K562 (cell line): ENCODE measurements at regions of chr1 and their contacts with region 1.

Region 1: DNA sequence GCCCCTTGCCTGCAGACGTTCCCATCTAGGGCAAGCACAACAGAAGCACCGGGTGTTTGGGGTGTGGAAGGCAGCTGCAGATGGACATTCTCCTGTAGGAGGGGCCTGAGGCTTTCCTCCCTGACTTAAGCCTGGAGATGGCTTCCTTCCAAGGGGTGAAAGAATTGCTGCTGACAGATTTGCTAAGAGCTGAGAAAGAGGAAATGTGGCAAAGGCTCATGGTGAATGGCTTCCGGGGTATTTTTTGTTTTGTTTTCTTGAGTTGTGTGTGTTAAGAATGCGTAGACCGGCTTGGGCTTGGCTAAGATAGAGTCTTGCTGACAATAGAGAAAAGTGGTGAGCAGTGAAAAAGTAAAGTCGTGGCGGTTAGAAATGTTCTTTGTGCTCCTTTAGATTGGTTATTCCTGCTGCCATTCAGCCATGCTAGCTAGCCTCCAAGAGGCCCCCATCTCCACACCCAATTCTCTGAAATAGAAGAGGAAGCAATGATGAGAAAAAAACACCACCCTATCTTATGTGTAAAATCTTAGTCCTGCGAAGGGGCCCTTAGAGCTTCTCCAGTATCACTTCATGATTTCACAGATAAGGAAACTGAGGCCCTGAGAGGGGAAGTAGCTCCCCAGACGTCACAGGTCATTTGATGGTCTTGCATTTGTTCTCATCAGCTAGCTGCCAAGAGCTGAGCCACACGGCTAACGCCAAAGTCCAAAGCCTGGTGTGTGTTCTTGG is 36.9 kb downstream of the EIF2D start:
- DNase-seq: peak; percentile 59 to 89 (median 75)
- ATAC-seq: peak; percentile 89
- H3K4me3 ChIP-seq: no peak overlapping the region
- H3K27ac ChIP-seq: peak overlapping the region; percentile 80
- H3K4me1 ChIP-seq: peaks cover 28 to 41% of the 10 kb centered on the region in 2 experiments
- H3K27me3 ChIP-seq: no peaks in the 10 kb centered on the region
- CTCF ChIP-seq: peak in 1 of 3 experiments; percentile 1; a peak in 1 of 6 replicates
- EP300 ChIP-seq: no peak; the same call in 1 of the 2 replicates
- POLR2A ChIP-seq: 0 out of 2 replicates have a peak, but pooled peaks have one; percentile 27
- RAD21 ChIP-seq: peak; percentile 27 to 32; a peak in 3 of 4 replicates

Region 2: GRCh38 chr1:206544562-206545257 is 30.6 kb before region 1 on chr1:
- CTCF ChIA-PET with region 1: no interaction called
- POLR2A ChIA-PET with region 1: interaction called, 3 read pairs
- in situ Hi-C with region 1: loop called (anchors 5 kb)
- intact Hi-C with region 1: loop called (anchors 1 kb)
- DNase-seq: peak; percentile 88 to 94 (median 92)
- ATAC-seq: peak; percentile 98
- H3K4me3 ChIP-seq: no peak overlapping the region
- H3K27ac ChIP-seq: no peak overlapping the region
- H3K4me1 ChIP-seq: peaks cover 7% of the 10 kb centered on the region in 2 experiments; a peak in 4 of 5 replicates
- H3K27me3 ChIP-seq: no peaks in the 10 kb centered on the region
- CTCF ChIP-seq: peak; percentile 95 to 98 (median 96)
- EP300 ChIP-seq: no peak
- POLR2A ChIP-seq: no peak
- RAD21 ChIP-seq: peak; percentile 87 to 95

Region 3: GRCh38 chr1:206556750-206557635 is 18.3 kb before region 1 on chr1:
- CTCF ChIA-PET with region 1: no interaction called
- POLR2A ChIA-PET with region 1: interaction called, 24 read pairs
- in situ Hi-C with region 1: no loop called
- intact Hi-C with region 1: loop called (anchors 1 kb)
- DNase-seq: peak; percentile 86 to 89 (median 88)
- ATAC-seq: peak; percentile 85
- H3K4me3 ChIP-seq: peak overlapping the region; percentile 63
- H3K27ac ChIP-seq: peak overlapping the region; percentile 81
- H3K4me1 ChIP-seq: peaks cover 38 to 67% of the 10 kb centered on the region in 2 experiments
- H3K27me3 ChIP-seq: no peaks in the 10 kb centered on the region
- CTCF ChIP-seq: peak in 2 of 3 experiments; percentile 16 to 20; a peak in 2 of 6 replicates
- EP300 ChIP-seq: peak; percentile 55
- POLR2A ChIP-seq: peak; percentile 70
- RAD21 ChIP-seq: 0 out of 4 replicates have a peak, but pooled peaks of 1 of the 2 experiments have one; percentile 10

Region 4: GRCh38 chr1:206563367-206564207 is 11.7 kb before region 1 on chr1:
- CTCF ChIA-PET with region 1: no interaction called
- POLR2A ChIA-PET with region 1: interaction called, 24 read pairs
- in situ Hi-C with region 1: no loop called
- intact Hi-C with region 1: no loop called
- DNase-seq: peak in 1 of 4 experiments; percentile 27
- ATAC-seq: no peak
- H3K4me3 ChIP-seq: no peak overlapping the region
- H3K27ac ChIP-seq: peak overlapping the region; percentile 44; the same call in 2 of the 3 replicates
- H3K4me1 ChIP-seq: peaks cover 16 to 47% of the 10 kb centered on the region in 2 experiments
- H3K27me3 ChIP-seq: no peaks in the 10 kb centered on the region
- CTCF ChIP-seq: no peak
- EP300 ChIP-seq: no peak
- POLR2A ChIP-seq: no peak
- RAD21 ChIP-seq: no peak

Region 5: GRCh38 chr1:206590025-206590758 is 14.9 kb after region 1 on chr1:
- CTCF ChIA-PET with region 1: no interaction called
- POLR2A ChIA-PET with region 1: no interaction called
- in situ Hi-C with region 1: no loop called
- intact Hi-C with region 1: no loop called
- DNase-seq: peak; percentile 49 to 62 (median 58)
- ATAC-seq: peak; percentile 77
- H3K4me3 ChIP-seq: no peak overlapping the region
- H3K27ac ChIP-seq: peak overlapping the region; percentile 31; the same call in 1 of the 3 replicates
- H3K4me1 ChIP-seq: peaks cover 0 to 14% of the 10 kb centered on the region in 2 experiments; a peak in 2 of 5 replicates
- H3K27me3 ChIP-seq: no peaks in the 10 kb centered on the region
- CTCF ChIP-seq: peak; percentile 46 to 80 (median 75); a peak in 5 of 6 replicates
- EP300 ChIP-seq: no peak
- POLR2A ChIP-seq: peak; percentile 33; the same call in 1 of the 2 replicates
- RAD21 ChIP-seq: peak; percentile 41 to 46; a peak in 3 of 4 replicates